ENCODE measurements at regions of chr19 and their contacts with region 1.

Region 1: DNA sequence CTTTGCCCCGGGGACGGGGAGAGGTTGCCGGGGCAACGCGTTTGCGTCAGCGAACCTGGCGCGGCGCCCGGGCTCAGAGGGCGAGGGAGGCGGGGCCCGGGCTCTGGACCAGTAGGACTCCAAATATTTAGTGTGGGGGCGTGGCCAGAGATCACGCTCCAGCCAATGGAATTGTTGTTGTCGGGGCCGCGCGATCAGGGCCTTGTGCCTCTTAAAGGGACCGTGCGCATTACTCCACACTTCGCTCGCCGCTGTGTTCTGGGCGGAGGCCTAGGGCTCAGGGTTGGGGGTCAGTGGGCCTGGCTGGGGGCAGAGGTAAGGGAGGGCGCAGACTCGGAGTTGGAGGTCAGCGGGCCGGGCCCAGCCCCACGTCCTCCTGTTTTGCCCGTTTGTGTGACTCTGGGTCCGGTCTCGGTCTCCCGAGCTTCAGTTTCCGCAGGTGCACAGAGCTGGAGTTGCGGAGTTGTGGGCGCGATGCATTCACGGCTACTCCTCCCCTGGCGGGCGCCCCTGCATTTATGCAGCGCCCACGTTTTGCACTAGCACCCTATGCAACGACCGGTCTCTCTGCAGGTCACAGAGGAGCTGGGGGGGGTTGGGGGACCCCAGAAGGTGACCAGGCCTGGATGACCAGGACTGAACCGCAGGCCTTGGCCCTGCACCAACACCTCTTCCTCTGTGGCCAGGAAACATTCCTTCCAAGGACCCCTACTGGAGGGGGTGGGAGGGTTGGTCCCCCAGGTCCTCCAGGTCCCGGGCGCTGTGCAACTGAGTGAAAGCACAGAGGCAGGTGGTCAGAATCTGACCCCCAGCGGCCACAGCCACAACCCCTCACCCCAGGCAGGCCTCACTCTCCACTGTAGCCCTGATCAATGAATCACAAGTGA is 10.7 kb upstream of the MKNK2 start:
- DNase-seq: peak; percentile 98 to 99
- ATAC-seq: peak; percentile 57 to 64
- H3K4me3 ChIP-seq: peak overlapping the region; percentile 65 to 96 (median 74)
- H3K27ac ChIP-seq: peak overlapping the region; percentile 95 to 100 (median 98)
- H3K4me1 ChIP-seq: peaks cover 42 to 57% of the 10 kb centered on the region in 2 donors
- H3K27me3 ChIP-seq: no peaks in the 10 kb centered on the region
- CTCF ChIP-seq: no peak
- POLR2A ChIP-seq: peak; percentile 88 to 95

Region 2: DNA sequence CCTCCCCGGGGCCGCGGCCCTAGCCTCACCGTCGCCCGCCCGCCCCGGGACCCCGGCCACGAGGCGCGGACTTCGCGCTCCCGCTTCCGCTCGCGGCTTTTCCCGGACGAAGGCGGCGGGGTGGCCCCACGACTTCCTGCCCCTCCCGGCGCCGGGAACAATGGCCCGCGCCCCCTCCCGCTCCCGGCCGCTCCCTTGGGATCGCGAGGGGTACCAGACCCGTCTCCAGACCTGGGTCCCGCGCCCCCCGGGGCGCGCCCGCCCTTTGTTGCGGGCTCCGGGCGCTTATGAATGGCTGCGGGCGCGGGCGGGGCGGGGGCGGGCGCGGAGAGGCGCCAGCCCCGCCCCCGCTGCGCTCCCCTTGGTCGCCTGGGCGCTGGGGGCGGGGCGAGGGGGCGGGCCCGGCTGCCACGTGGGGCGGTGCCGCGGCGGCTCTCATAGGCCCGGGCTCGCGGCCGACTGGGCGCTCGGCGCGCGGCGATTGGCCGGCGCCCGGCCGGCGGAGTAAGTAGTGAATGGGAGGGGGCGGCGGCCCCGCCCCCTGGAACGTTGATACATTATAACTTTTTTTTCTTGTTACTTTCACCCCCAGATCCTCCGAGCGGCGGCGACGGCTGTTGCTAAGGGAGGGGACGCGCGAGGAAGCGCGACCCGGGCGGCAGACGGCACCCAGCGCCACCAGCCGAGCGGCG is 812.3 kb before region 1 on chr19:
- in situ Hi-C with region 1: no loop called
- intact Hi-C with region 1: loop called (anchors 5 kb)
- DNase-seq: peak; percentile 87 to 94
- ATAC-seq: peak; percentile 12
- H3K4me3 ChIP-seq: peak overlapping the region; percentile 69 to 89 (median 85)
- H3K27ac ChIP-seq: peak overlapping the region; percentile 95 to 100 (median 98)
- H3K4me1 ChIP-seq: peaks cover 51 to 67% of the 10 kb centered on the region in 2 donors
- H3K27me3 ChIP-seq: no peaks in the 10 kb centered on the region
- CTCF ChIP-seq: no peak
- POLR2A ChIP-seq: peak; percentile 94 to 100

Region 3: DNA sequence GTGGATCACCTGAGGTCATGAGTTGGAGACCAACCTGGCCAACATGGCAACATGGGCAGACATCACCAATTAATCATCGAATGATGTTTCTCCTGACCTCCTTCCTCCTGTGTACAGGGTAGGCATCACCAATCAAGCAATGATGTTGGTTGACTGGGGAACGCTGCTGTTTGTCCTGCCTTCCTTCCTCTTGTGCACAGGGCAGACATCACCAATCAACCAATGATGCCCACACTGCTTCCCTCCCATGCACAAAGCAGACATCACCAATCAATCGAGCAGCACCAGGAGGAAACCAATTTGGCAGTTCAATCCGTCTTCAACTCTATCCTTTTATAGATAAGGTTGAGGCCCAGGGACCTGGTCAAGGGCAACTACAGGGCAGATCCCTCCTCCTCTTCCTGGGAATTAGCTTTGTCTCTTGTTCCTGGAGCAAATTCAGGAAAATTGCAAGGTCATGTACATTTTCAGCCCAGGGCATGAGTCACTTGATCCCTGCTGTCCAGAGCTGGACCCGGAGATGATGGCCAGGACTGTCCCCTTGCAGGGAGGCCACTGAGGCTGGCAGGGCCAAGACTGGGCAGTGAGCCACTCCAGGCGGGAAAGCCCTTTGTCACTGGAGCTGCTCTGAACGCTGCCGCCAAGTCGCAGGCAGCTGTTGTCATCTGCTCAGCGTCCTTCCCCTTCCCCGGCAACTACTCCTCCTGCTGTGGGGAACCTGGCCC is 126.1 kb before region 1 on chr19:
- in situ Hi-C with region 1: loop called in 1 of 4 experiments (anchors 10 kb)
- intact Hi-C with region 1: no loop called
- DNase-seq: peak; percentile 31 to 80
- ATAC-seq: peak; percentile 38 to 47
- H3K4me3 ChIP-seq: no peak overlapping the region
- H3K27ac ChIP-seq: peak overlapping the region; percentile 49 to 79 (median 74)
- H3K4me1 ChIP-seq: peaks cover 14 to 15% of the 10 kb centered on the region in 2 donors
- H3K27me3 ChIP-seq: no peaks in the 10 kb centered on the region
- CTCF ChIP-seq: no peak
- POLR2A ChIP-seq: peak in 1 of 2 donors; percentile 8

Region 4: DNA sequence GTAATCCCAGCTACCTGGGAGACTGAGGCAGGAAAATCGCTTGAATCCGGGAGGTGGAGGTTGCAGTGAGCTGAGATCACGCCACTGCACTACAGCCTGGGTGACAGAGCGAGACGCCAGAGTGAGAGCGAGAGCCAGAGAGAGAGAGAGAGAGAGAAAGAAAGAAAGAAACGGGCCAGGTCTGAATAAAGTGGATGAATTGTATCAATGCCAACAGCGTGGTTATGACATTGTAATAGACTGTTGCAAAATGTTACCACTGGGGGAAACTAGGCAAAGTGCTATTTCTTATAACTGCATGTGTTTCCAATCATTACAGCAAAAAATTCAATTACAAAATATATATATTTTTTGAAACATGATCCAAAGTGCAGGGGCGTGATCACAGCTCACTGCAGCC is 34.4 kb before region 1 on chr19:
- in situ Hi-C with region 1: loop called (anchors 5 kb)
- intact Hi-C with region 1: loop called (anchors 1 kb)
- DNase-seq: peak in 1 of 2 donors; percentile 36
- ATAC-seq: peak in 1 of 2 donors; percentile 23
- H3K4me3 ChIP-seq: no peak overlapping the region
- H3K27ac ChIP-seq: peak overlapping the region; percentile 24 to 96 (median 66)
- H3K4me1 ChIP-seq: peaks cover 14 to 15% of the 10 kb centered on the region in 2 donors
- H3K27me3 ChIP-seq: no peaks in the 10 kb centered on the region
- CTCF ChIP-seq: no peak
- POLR2A ChIP-seq: no peak

Region 5: GRCh38 chr19:2050991-2051772 is 10.6 kb before region 1 on chr19 and contains the start of gene MKNK2:
- in situ Hi-C with region 1: no loop called
- intact Hi-C with region 1: loop called (anchors 1 kb)
- DNase-seq: peak; percentile 86 to 87
- ATAC-seq: peak; percentile 45 to 52
- H3K4me3 ChIP-seq: peak within 1 kb of the TSS; percentile 82 to 100 (median 95)
- H3K27ac ChIP-seq: peak within 1 kb of the TSS; percentile 96 to 100 (median 100)
- H3K4me1 ChIP-seq: peaks cover 58 to 61% of the 10 kb centered on the region in 2 donors
- H3K27me3 ChIP-seq: no peaks in the 10 kb centered on the region
- CTCF ChIP-seq: peak; percentile 34 to 81 (median 58)
- POLR2A ChIP-seq: peak; percentile 100
- total RNA-seq, gene MKNK2: 1,858 to 2,149 (median 1,965) TPM

Region 6: GRCh38 chr19:3369337-3370213 is 1307.8 kb after region 1 on chr19:
- in situ Hi-C with region 1: no loop called
- intact Hi-C with region 1: loop called (anchors 10 kb)
- DNase-seq: peak; percentile 67 to 83
- ATAC-seq: peak; percentile 5 to 18
- H3K4me3 ChIP-seq: peak overlapping the region; percentile 87 to 99 (median 96)
- H3K27ac ChIP-seq: peak overlapping the region; percentile 98 to 100 (median 98)
- H3K4me1 ChIP-seq: peaks cover 44 to 57% of the 10 kb centered on the region in 2 donors
- H3K27me3 ChIP-seq: no peaks in the 10 kb centered on the region
- CTCF ChIP-seq: peak in 1 of 5 experiments; percentile 13
- POLR2A ChIP-seq: peak; percentile 85 to 93

Measured in gastrocnemius medialis (tissue), 4 donors.